ENCODE measurements at regions of chr12 and their contacts with region 1.

Region 1: GRCh38 chr12:118625050-118625675 is 248.8 kb downstream of the SUDS3 start:
- DNase-seq: no peak
- ATAC-seq: peak in 1 of 2 donors; percentile 84

Region 2: DNA sequence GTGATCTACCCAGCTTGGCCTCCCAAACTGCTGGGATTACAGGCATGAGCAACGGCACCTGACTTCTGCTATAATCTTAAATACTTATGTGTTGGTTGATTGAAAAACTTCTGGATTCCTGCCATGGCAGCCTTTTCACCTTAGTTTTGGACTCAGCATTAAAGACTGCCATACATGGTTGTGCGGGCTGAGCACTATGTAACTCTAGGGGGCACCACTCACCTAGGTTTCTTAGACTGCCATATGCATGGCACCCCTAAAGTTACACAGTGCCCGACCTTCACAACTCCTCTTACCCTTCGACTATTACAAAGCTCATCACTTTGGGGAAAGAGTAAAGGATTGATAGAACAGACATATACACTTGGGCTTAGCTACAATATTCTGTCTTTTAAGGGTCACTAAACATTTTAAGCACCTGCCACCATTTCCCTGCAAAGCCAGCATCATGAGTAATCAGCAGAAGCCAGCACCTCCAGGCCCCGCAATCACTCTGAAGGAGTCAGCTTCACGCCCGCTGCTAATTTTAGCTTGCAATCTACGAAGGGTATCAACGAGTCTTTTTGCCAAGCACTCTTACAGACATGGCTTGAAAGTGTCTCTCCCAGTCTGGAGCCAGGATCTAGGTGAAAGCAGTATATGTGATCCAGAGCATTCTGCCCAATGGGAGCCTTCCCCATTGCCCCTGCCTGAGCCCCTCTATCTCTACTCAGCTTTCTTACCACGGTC is 189.0 kb before region 1 on chr12:
- intact Hi-C with region 1: loop called in 1 of 2 experiments (anchors 10 kb)
- DNase-seq: no peak
- ATAC-seq: peak; percentile 44 to 61

Measured in left cardiac atrium (tissue), 4 donors.